ENCODE measurements at regions of chr5 and their contacts with region 1.

Region 1: DNA sequence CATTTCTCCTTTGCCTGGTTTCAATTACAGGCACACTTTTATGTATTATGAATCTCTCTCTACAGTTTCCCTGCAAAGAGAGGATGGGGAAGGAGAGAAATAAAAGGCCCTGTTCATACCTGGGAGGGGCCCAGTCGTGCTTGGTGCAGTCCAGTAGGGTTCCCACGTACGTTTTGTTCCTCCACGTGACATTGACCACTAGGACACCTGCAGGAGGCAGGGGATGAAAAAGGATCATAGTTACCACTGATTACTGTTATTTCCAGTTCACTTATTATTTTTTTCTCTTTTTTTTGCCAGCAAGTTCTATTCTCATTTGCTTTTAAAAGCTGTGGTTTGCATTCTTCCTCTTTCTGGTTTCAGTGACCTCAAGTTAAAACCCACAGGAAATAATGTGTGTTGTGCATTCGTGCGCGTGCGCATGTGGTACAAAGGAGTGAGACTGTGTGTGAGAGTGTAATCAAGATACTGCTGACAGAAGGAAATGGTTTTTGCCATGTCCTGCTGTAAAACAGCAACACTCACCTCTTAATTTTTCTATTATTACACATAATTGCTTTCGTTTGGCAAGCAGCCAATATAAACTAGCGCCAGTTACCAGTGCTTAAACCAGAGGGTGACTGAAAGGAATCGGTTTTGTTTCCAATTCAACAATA is 96.8 kb downstream of the ZNF608 start:
- DNase-seq: peak; percentile 99
- ATAC-seq: peak; percentile 85
- H3K4me3 ChIP-seq: peak overlapping the region; percentile 17; the same call in 1 of the 2 replicates
- H3K27ac ChIP-seq: peak overlapping the region; percentile 68
- H3K4me1 ChIP-seq: peaks cover 49% of the 10 kb centered on the region
- H3K27me3 ChIP-seq: no peaks in the 10 kb centered on the region
- CTCF ChIP-seq: 0 out of 6 replicates have a peak, but pooled peaks of 1 of the 3 experiments have one; percentile 3
- EP300 ChIP-seq: peak; percentile 96 to 98
- POLR2A ChIP-seq: no peak
- RAD21 ChIP-seq: peak; percentile 28; the same call in 1 of the 2 replicates

Region 2: DNA sequence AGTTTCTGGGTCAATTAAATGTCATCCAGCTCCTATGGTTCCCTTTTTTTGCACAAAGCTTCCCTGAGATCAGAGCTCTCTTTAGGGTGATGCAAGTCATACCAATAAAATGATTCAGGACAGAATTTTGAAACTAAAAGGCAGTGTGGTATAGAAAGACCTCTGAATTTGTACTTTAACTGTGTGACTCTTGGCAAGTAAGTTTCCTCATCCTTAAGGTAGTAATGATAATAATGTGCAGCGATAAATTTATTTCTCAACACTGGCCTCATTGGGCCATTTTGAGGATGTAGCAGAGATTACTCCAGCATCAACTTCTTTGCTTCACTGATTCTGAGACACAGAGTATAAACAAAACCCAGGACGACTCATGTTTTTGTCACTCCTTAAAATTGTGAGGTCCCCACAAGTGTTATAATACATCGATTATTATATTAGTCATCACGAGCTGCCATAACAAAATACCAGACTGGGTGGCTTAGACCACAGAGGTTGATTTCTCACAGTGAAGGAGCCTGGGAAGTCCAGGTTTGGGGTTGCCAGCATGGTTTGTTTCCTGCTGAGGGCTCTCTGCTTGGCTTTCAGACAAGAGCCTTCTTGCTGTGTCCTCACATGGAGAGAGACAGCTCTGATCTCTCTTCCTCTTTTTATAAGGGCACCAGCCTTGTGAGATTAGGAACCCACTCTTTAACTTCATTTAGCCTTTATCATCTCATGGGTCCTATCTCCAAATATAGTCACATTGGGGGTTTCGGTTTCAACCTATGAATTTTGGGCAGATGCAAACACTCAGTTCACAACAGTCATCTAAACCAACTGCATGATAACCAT is 196.2 kb before region 1 on chr5:
- CTCF ChIA-PET with region 1: no interaction called
- POLR2A ChIA-PET with region 1: no interaction called
- RAD21 ChIA-PET with region 1: no interaction called
- SMC1A ChIA-PET with region 1: interaction called, 4 read pairs
- in situ Hi-C with region 1: no loop called
- intact Hi-C with region 1: loop called (anchors 1 kb)
- DNase-seq: peak; percentile 83
- ATAC-seq: peak; percentile 98
- H3K4me3 ChIP-seq: no peak overlapping the region
- H3K27ac ChIP-seq: peak overlapping the region; percentile 40; the same call in 1 of the 2 replicates
- H3K4me1 ChIP-seq: peaks cover 19% of the 10 kb centered on the region
- H3K27me3 ChIP-seq: no peaks in the 10 kb centered on the region
- CTCF ChIP-seq: no peak
- EP300 ChIP-seq: no peak
- POLR2A ChIP-seq: no peak
- RAD21 ChIP-seq: no peak

Region 3: GRCh38 chr5:124706729-124707361 is 57.2 kb after region 1 on chr5:
- CTCF ChIA-PET with region 1: interaction called, 3 read pairs
- POLR2A ChIA-PET with region 1: interaction called, 3 read pairs
- RAD21 ChIA-PET with region 1: interaction called, 19 read pairs
- SMC1A ChIA-PET with region 1: interaction called, 13 read pairs
- in situ Hi-C with region 1: no loop called
- intact Hi-C with region 1: loop called (anchors 2 kb)
- DNase-seq: no peak
- ATAC-seq: no peak
- H3K4me3 ChIP-seq: peak overlapping the region; percentile 16; the same call in 1 of the 2 replicates
- H3K27ac ChIP-seq: peak overlapping the region; percentile 78
- H3K4me1 ChIP-seq: peaks cover 61% of the 10 kb centered on the region
- H3K27me3 ChIP-seq: no peaks in the 10 kb centered on the region
- CTCF ChIP-seq: no peak
- EP300 ChIP-seq: no peak
- POLR2A ChIP-seq: no peak
- RAD21 ChIP-seq: no peak

Region 4: GRCh38 chr5:124748687-124749594 is 99.3 kb after region 1 on chr5:
- CTCF ChIA-PET with region 1: interaction called, 3 read pairs
- POLR2A ChIA-PET with region 1: interaction called, 4 read pairs
- RAD21 ChIA-PET with region 1: interaction called, 49 read pairs
- SMC1A ChIA-PET with region 1: interaction called, 44 read pairs
- in situ Hi-C with region 1: no loop called
- intact Hi-C with region 1: no loop called
- DNase-seq: peak; percentile 86
- ATAC-seq: peak; percentile 89
- H3K4me3 ChIP-seq: peak overlapping the region; percentile 83
- H3K27ac ChIP-seq: peak overlapping the region; percentile 94
- H3K4me1 ChIP-seq: peaks cover 3% of the 10 kb centered on the region; the same call in 1 of the 2 replicates
- H3K27me3 ChIP-seq: 0 out of 4 replicates have a peak, but pooled peaks cover 0 to 4% of the 10 kb centered on the region in 2 experiments
- CTCF ChIP-seq: no peak
- EP300 ChIP-seq: no peak
- POLR2A ChIP-seq: peak; percentile 48; the same call in 1 of the 2 replicates
- RAD21 ChIP-seq: no peak

Region 5: DNA sequence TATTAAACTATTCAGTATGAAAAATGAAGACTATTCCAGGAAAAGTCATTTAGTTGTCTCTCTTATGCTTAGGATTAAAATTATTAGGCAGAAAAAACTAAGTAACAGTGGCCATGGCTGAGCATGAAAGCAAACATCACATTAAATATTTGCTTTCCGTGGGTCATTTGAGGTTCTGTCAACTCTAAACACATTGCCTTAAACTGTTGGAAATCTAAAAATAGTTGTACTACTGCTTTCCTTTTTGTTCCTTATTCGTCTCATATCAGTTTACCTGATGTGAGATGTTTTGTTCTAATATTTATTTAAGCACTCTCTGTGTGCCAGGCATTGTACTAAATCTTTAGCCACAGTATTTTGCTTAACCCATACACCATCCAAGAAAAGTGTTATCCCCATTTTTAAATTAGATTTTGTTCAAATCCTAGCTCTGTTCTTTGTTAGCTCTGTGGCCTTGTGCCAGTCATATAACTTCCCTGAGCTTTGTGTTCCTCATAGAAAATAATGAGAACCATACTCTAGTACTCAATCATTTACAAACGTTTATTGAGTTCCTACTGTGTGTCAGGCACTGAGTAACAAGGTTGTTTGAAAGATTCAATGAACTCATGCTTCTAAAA is 115.5 kb after region 1 on chr5:
- CTCF ChIA-PET with region 1: no interaction called
- POLR2A ChIA-PET with region 1: no interaction called
- RAD21 ChIA-PET with region 1: no interaction called
- SMC1A ChIA-PET with region 1: no interaction called
- in situ Hi-C with region 1: no loop called
- intact Hi-C with region 1: no loop called
- DNase-seq: no peak
- ATAC-seq: no peak
- H3K4me3 ChIP-seq: no peak overlapping the region
- H3K27ac ChIP-seq: no peak overlapping the region
- H3K4me1 ChIP-seq: no peaks in the 10 kb centered on the region
- H3K27me3 ChIP-seq: no peaks in the 10 kb centered on the region
- CTCF ChIP-seq: no peak
- EP300 ChIP-seq: no peak
- POLR2A ChIP-seq: no peak
- RAD21 ChIP-seq: no peak

Region 6: GRCh38 chr5:124920909-124921666 is 271.5 kb after region 1 on chr5:
- CTCF ChIA-PET with region 1: interaction called, 3 read pairs
- POLR2A ChIA-PET with region 1: no interaction called
- RAD21 ChIA-PET with region 1: interaction called, 9 read pairs
- SMC1A ChIA-PET with region 1: interaction called, 13 read pairs
- in situ Hi-C with region 1: no loop called
- intact Hi-C with region 1: loop called (anchors 5 kb)
- DNase-seq: no peak
- ATAC-seq: peak; percentile 92
- H3K4me3 ChIP-seq: peak overlapping the region; percentile 44; the same call in 1 of the 2 replicates
- H3K27ac ChIP-seq: peak overlapping the region; percentile 86
- H3K4me1 ChIP-seq: peaks cover 30% of the 10 kb centered on the region
- H3K27me3 ChIP-seq: no peaks in the 10 kb centered on the region
- CTCF ChIP-seq: peak in 1 of 3 experiments; percentile 14; a peak in 1 of 6 replicates
- EP300 ChIP-seq: peak; percentile 83 to 85
- POLR2A ChIP-seq: no peak
- RAD21 ChIP-seq: peak; percentile 27

Region 7: DNA sequence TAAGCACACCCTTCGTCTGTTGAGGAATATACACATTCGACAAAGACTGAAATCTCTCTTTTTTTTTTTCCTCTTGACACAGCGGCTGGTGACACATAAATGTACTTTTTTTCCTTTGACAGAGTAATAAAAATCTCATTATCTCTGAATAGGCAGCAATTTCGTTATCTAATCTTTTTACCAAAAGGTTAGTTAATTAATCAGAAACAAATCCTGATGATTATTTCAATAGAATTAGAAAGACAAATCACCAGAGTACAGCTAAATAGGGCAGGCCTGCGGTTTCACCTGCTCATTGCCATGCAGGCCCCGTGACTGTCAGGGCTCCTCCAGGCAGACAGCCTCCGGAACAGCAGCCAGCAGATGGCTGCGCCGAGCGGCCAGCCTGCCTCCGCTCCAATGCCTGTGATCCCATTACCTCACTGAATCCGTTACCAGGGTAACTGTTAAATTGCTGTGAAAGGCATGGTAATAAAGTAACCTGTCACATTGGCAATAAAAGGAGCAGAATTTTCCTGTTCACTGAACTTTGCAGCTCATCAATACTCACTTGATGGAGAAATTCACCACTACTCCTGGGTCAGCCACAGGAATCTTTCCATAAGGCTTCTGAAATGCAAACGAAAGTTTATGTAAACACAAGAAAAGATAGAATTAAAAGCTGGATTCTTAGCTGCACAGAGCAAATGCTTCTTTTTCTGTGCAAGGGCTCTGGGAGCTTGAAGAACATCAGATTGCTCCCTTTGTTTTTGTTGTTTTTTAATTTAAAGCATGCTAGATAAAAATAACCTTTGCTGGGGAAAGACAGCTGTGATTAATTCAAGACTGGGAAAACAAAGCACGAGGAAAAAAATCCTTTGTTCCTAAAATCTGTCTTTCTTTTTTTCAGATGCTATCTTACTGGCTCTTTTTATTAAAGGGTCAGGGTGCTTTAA is 763.2 kb after region 1 on chr5:
- CTCF ChIA-PET with region 1: no interaction called
- POLR2A ChIA-PET with region 1: no interaction called
- RAD21 ChIA-PET with region 1: no interaction called
- SMC1A ChIA-PET with region 1: interaction called, 3 read pairs
- in situ Hi-C with region 1: no loop called
- intact Hi-C with region 1: loop called (anchors 10 kb)
- DNase-seq: no peak
- ATAC-seq: peak; percentile 57
- H3K4me3 ChIP-seq: peak overlapping the region; percentile 51; the same call in 1 of the 2 replicates
- H3K27ac ChIP-seq: peak overlapping the region; percentile 88
- H3K4me1 ChIP-seq: peaks cover 43% of the 10 kb centered on the region
- H3K27me3 ChIP-seq: no peaks in the 10 kb centered on the region
- CTCF ChIP-seq: peak; percentile 2 to 23 (median 3); a peak in 1 of 6 replicates
- EP300 ChIP-seq: no peak
- POLR2A ChIP-seq: no peak
- RAD21 ChIP-seq: 0 out of 2 replicates have a peak, but pooled peaks have one; percentile 23

Measured in GM12878 (cell line).